Sigmoid colon (tissue), 7 donors: ENCODE measurements at regions of chr1 and their contacts with region 1.

Region 1: GRCh38 chr1:207052911-207053769 is at the start of gene PFKFB2:
- DNase-seq: peak; percentile 98
- H3K4me3 ChIP-seq: peak within 1 kb of the TSS; percentile 48 to 66 (median 59)
- H3K27ac ChIP-seq: peak within 1 kb of the TSS; percentile 87 to 95 (median 90)
- H3K4me1 ChIP-seq: peaks cover 0 to 32% (median 30%) of the 10 kb centered on the region in 4 donors
- H3K27me3 ChIP-seq: no peaks in the 10 kb centered on the region
- CTCF ChIP-seq: peak in 3 of 4 experiments; percentile 12 to 51 (median 42)
- EP300 ChIP-seq: no peak
- POLR2A ChIP-seq: peak; percentile 62 to 88
- total RNA-seq, gene PFKFB2: 5.0 to 7.8 (median 5.5) TPM

Region 2: GRCh38 chr1:207077470-207078377 is 24.6 kb after region 1 on chr1:
- intact Hi-C with region 1: loop called (anchors 1 kb)
- DNase-seq: peak; percentile 73
- H3K4me3 ChIP-seq: no peak overlapping the region
- H3K27ac ChIP-seq: no peak overlapping the region
- H3K4me1 ChIP-seq: peaks cover 0 to 13% (median 0%) of the 10 kb centered on the region in 4 donors
- H3K27me3 ChIP-seq: no peaks in the 10 kb centered on the region
- CTCF ChIP-seq: peak; percentile 47 to 83 (median 80)
- EP300 ChIP-seq: no peak
- POLR2A ChIP-seq: no peak

Region 3: DNA sequence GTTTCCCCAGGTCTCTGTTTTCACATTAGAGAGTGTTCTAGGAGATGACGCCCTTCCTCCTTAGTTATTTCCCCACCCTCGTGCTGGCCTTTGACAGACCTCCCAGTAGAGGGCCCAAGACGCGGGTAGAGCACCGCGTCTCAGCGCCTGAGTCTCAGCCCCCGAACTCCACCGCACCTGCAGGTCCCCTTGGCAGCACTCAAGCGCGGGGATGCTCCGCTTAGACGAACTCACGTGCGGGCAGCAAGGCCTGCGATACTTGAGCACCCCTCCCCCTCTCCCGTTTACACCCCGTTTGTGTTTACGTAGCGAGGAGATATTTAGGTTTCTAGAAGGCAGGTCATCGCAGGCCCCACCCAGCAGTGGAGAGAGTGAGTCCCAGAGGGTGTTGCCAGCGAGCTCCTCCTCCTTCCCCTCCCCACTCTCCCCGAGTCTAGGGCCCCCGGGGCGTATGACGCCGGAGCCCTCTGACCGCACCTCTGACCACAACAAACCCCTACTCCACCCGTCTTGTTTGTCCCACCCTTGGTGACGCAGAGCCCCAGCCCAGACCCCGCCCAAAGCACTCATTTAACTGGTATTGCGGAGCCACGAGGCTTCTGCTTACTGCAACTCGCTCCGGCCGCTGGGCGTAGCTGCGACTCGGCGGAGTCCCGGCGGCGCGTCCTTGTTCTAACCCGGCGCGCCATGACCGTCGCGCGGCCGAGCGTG is 268.1 kb after region 1 on chr1 and contains the start of gene CD55:
- intact Hi-C with region 1: loop called (anchors 2 kb)
- DNase-seq: peak; percentile 98
- H3K4me3 ChIP-seq: peak within 1 kb of the TSS; percentile 64 to 98 (median 80)
- H3K27ac ChIP-seq: peak within 1 kb of the TSS; percentile 87 to 91 (median 88)
- H3K4me1 ChIP-seq: peaks cover 0 to 17% (median 11%) of the 10 kb centered on the region in 4 donors
- H3K27me3 ChIP-seq: no peaks in the 10 kb centered on the region
- CTCF ChIP-seq: peak in 1 of 4 experiments; percentile 11
- EP300 ChIP-seq: peak in 3 of 4 donors; percentile 14 to 43 (median 23)
- POLR2A ChIP-seq: peak; percentile 38 to 76
- total RNA-seq, gene CD55: 25.3 to 48.9 (median 42.3) TPM

Region 4: GRCh38 chr1:207751790-207752455 is 698.8 kb after region 1 on chr1 and contains the start of gene CD46:
- intact Hi-C with region 1: loop called (anchors 5 kb)
- DNase-seq: peak; percentile 98
- H3K4me3 ChIP-seq: peak within 1 kb of the TSS; percentile 75 to 93 (median 79)
- H3K27ac ChIP-seq: peak within 1 kb of the TSS; percentile 82 to 94 (median 88)
- H3K4me1 ChIP-seq: peaks cover 0 to 50% (median 42%) of the 10 kb centered on the region in 4 donors
- H3K27me3 ChIP-seq: no peaks in the 10 kb centered on the region
- CTCF ChIP-seq: no peak
- EP300 ChIP-seq: peak in 1 of 4 donors; percentile 32
- POLR2A ChIP-seq: peak; percentile 78 to 96
- total RNA-seq, gene CD46: 104 to 143 (median 113) TPM